ENCODE measurements at regions of chr3 and their contacts with region 1.

Region 1: DNA sequence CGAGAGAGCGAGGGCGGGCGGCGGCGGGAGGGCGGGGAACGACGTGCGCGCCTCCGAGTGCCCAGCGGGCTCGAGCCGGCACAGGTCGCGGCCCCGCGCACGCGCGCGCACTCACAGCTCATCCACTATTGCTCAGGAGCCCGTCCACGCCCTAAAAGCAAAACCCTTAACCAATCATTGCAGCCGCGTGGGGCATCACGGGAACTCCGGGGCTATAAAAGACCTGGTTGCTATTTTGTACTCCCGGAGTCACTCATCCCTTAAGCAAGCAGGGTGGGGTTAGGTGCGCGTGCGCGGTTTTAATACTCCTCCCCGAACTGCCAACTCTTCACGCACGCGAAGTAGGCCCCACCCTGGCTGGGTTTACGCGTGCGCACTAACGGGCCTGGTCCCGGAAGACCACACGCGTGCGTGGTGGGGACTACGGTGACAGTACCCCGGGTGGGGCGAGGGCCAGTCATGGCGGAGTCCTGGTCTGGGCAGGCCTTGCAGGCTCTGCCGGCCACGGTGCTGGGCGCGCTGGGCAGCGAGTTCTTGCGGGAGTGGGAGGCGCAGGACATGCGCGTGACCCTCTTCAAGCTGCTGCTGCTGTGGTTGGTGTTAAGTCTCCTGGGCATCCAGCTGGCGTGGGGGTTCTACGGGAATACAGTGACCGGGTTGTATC is at the starts of genes RHOA and TCTA:
- DNase-seq: peak; percentile 94 to 100 (median 99)
- ATAC-seq: peak; percentile 90
- H3K4me3 ChIP-seq: peak within 1 kb of the TSS; percentile 86
- H3K4me3 Mint-ChIP-seq: peak within 1 kb of the TSS; percentile 82 to 97 (median 94)
- H3K27ac ChIP-seq: peak within 1 kb of the TSS; percentile 96
- H3K27ac Mint-ChIP-seq: peak within 1 kb of the TSS; percentile 88 to 97 (median 95)
- H3K4me1 ChIP-seq: peaks cover 61 to 65% of the 10 kb centered on the region in 2 donors
- H3K4me1 Mint-ChIP-seq: peaks cover 51 to 82% (median 71%) of the 10 kb centered on the region in 7 donors
- H3K27me3 ChIP-seq: no peaks in the 10 kb centered on the region
- H3K27me3 Mint-ChIP-seq: peaks cover 0 to 2% (median 0%) of the 10 kb centered on the region in 5 donors
- total RNA-seq, gene RHOA: 212 to 411 (median 218) TPM
- total RNA-seq, gene TCTA: 24.9 to 34.5 (median 28.5) TPM

Region 2: GRCh38 chr3:49021813-49022687 is 390.1 kb before region 1 on chr3 and contains the start of gene NDUFAF3:
- CTCF ChIA-PET with region 1: no interaction called
- POLR2A ChIA-PET with region 1: no interaction called
- intact Hi-C with region 1: loop called in 1 of 2 experiments (anchors 1 kb)
- DNase-seq: peak; percentile 84 to 96 (median 89)
- ATAC-seq: peak; percentile 89
- H3K4me3 ChIP-seq: peak within 1 kb of the TSS; percentile 99
- H3K4me3 Mint-ChIP-seq: peak within 1 kb of the TSS; percentile 92 to 99 (median 97)
- H3K27ac ChIP-seq: peak within 1 kb of the TSS; percentile 98
- H3K27ac Mint-ChIP-seq: peak within 1 kb of the TSS; percentile 95 to 99 (median 98)
- H3K4me1 ChIP-seq: peaks cover 24 to 25% of the 10 kb centered on the region in 2 donors
- H3K4me1 Mint-ChIP-seq: peaks cover 21 to 61% (median 47%) of the 10 kb centered on the region in 7 donors
- H3K27me3 ChIP-seq: no peaks in the 10 kb centered on the region
- H3K27me3 Mint-ChIP-seq: peaks cover 0 to 2% (median 0%) of the 10 kb centered on the region in 5 donors
- total RNA-seq, gene NDUFAF3: 63.8 to 110 (median 89.3) TPM

Region 3: DNA sequence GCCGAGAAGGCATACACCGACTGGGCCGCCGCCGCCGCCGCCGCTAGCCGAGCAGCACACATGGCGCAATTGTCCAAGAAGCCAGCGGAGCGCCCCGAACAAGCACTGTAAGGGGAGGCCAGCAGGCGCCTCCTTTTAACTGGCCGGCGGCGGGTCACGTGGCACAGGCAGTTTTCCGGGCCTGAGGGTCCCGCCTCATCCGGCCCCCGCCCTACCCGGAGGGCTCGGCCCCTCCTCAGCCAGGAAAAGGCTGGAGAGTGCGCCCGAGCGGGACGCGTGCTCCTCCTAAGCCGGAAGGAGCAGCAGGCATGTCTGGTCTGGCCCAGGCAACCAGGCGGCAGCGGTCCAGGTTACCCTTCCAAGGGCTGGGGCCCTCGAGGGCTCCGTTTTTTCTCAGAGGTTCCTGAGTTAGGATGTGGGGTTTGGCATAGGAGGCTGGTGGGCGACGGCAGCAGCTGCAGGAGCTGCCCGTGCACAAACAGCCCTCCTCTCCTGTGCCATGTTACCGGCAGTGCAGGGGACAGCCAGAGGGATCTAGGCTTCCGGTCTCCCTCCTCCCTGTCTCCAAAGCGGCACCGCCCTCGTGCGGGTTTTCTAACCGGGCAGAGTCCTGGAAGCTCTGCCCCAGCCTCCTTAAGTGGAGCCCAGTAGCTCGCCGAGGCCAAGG is 53.8 kb before region 1 on chr3 and contains the start of gene GPX1:
- CTCF ChIA-PET with region 1: no interaction called
- POLR2A ChIA-PET with region 1: interaction called, 4 read pairs
- intact Hi-C with region 1: loop called (anchors 1 kb)
- DNase-seq: peak; percentile 45 to 89 (median 57)
- ATAC-seq: peak; percentile 87
- H3K4me3 ChIP-seq: peak within 1 kb of the TSS; percentile 85
- H3K4me3 Mint-ChIP-seq: peak within 1 kb of the TSS; percentile 88 to 99 (median 92)
- H3K27ac ChIP-seq: peak within 1 kb of the TSS; percentile 81
- H3K27ac Mint-ChIP-seq: peak within 1 kb of the TSS; percentile 92 to 98 (median 95)
- H3K4me1 ChIP-seq: peaks cover 17% of the 10 kb centered on the region in 2 donors
- H3K4me1 Mint-ChIP-seq: peaks cover 14 to 43% (median 25%) of the 10 kb centered on the region in 7 donors
- H3K27me3 ChIP-seq: no peaks in the 10 kb centered on the region
- H3K27me3 Mint-ChIP-seq: no peaks in the 10 kb centered on the region
- total RNA-seq, gene GPX1: 56.9 to 201 (median 86.9) TPM

Region 4: GRCh38 chr3:49428697-49429100 is 16.6 kb after region 1 on chr3:
- CTCF ChIA-PET with region 1: interaction called, 6 read pairs
- POLR2A ChIA-PET with region 1: interaction called, 26 read pairs
- intact Hi-C with region 1: loop called (anchors 1 kb)
- DNase-seq: peak in 1 of 9 donors; percentile 13
- ATAC-seq: no peak
- H3K4me3 ChIP-seq: peak overlapping the region; percentile 84
- H3K4me3 Mint-ChIP-seq: peak overlapping the region; percentile 88 to 98 (median 94)
- H3K27ac ChIP-seq: peak overlapping the region; percentile 83
- H3K27ac Mint-ChIP-seq: peak overlapping the region; percentile 49 to 96 (median 94)
- H3K4me1 ChIP-seq: peaks cover 0 to 5% of the 10 kb centered on the region in 2 donors
- H3K4me1 Mint-ChIP-seq: peaks cover 17 to 37% (median 28%) of the 10 kb centered on the region in 7 donors
- H3K27me3 ChIP-seq: no peaks in the 10 kb centered on the region
- H3K27me3 Mint-ChIP-seq: no peaks in the 10 kb centered on the region

Region 5: DNA sequence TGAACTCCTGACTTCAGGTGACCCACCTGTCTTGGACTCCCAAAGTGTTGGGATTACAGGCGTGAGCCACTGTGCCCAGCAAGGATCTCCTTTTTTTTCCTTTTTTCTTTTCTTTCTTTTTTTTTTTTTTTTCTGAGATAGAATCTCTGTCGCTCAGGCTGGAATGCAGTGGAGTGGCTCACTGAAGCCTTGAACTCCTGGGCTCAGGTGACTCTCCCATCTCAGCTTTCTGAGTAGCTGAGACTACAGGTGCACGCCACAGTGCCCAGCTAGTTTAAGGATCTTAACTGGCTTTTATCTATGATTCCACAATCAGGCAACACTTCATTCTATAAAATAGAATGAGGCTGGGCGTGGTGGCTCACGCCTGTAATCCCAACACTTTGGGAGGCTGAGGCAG is 33.3 kb after region 1 on chr3:
- CTCF ChIA-PET with region 1: interaction called, 23 read pairs
- POLR2A ChIA-PET with region 1: interaction called, 17 read pairs
- intact Hi-C with region 1: loop called (anchors 1 kb)
- DNase-seq: no peak
- ATAC-seq: no peak
- H3K4me3 ChIP-seq: no peak overlapping the region
- H3K4me3 Mint-ChIP-seq: no peak overlapping the region
- H3K27ac ChIP-seq: no peak overlapping the region
- H3K27ac Mint-ChIP-seq: peak overlapping the region in 3 of 9 donors; percentile 45 to 92 (median 60)
- H3K4me1 ChIP-seq: peaks cover 10 to 15% of the 10 kb centered on the region in 2 donors
- H3K4me1 Mint-ChIP-seq: peaks cover 5 to 25% (median 18%) of the 10 kb centered on the region in 7 donors
- H3K27me3 ChIP-seq: no peaks in the 10 kb centered on the region
- H3K27me3 Mint-ChIP-seq: no peaks in the 10 kb centered on the region

Region 6: GRCh38 chr3:49454458-49454857 is 42.4 kb after region 1 on chr3:
- CTCF ChIA-PET with region 1: interaction called, 17 read pairs
- POLR2A ChIA-PET with region 1: interaction called, 17 read pairs
- intact Hi-C with region 1: loop called (anchors 1 kb)
- DNase-seq: no peak
- ATAC-seq: no peak
- H3K4me3 ChIP-seq: no peak overlapping the region
- H3K4me3 Mint-ChIP-seq: no peak overlapping the region
- H3K27ac ChIP-seq: no peak overlapping the region
- H3K27ac Mint-ChIP-seq: peak overlapping the region in 1 of 9 donors; percentile 63
- H3K4me1 ChIP-seq: no peaks in the 10 kb centered on the region
- H3K4me1 Mint-ChIP-seq: no peaks in the 10 kb centered on the region
- H3K27me3 ChIP-seq: no peaks in the 10 kb centered on the region
- H3K27me3 Mint-ChIP-seq: no peaks in the 10 kb centered on the region

Region 7: DNA sequence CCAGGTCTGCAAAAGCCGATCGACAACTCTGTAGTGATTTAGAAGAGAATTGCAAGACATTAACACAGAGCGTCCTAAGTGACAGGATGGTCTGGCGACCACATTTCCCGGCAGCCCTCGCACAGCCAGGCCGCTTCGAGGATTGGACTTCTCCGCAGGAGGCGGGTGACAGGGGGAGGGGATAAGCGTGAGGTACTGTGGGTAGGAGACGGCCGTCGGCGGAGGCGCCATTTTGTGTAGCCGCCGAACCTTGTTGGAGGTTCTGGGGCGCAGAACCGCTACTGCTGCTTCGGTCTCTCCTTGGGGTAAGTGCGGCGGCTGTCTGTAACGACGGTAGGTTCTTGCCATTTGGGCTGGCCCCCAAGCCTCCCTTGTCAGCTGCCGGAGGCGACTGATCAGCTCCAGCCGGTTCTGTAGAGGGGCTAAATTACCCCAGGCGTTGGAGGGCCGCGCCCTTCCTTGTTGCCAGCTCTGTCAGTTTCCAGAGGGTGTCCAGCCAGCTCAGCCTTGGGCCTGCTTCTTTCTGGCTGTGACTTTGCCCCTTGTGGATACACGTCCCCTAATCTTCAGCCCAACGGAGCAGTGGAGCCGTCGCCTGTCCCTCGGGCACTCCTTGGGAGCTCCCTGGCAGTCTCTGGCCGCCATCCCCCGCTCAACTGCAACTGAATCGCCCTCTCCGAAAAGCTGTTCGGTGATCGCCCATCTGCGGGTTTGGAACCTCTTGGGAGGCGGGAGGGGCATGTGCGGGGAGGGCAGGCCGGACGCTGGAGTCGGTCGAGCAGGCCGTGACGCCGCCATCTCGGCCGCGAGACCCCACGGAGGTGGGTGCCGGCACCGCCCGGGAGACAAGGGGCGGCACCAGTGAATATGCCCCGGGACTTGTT is 676.9 kb after region 1 on chr3 and contains the start of gene RBM5:
- CTCF ChIA-PET with region 1: no interaction called
- POLR2A ChIA-PET with region 1: no interaction called
- intact Hi-C with region 1: loop called in 1 of 2 experiments (anchors 10 kb)
- DNase-seq: peak; percentile 71 to 91 (median 89)
- ATAC-seq: peak; percentile 100
- H3K4me3 ChIP-seq: peak within 1 kb of the TSS; percentile 88
- H3K4me3 Mint-ChIP-seq: peak within 1 kb of the TSS; percentile 94 to 98 (median 96)
- H3K27ac ChIP-seq: peak within 1 kb of the TSS; percentile 98
- H3K27ac Mint-ChIP-seq: peak within 1 kb of the TSS; percentile 94 to 99 (median 97)
- H3K4me1 ChIP-seq: peaks cover 16 to 23% of the 10 kb centered on the region in 2 donors
- H3K4me1 Mint-ChIP-seq: peaks cover 24 to 36% (median 32%) of the 10 kb centered on the region in 7 donors
- H3K27me3 ChIP-seq: no peaks in the 10 kb centered on the region
- H3K27me3 Mint-ChIP-seq: no peaks in the 10 kb centered on the region
- total RNA-seq, gene RBM5: 223 to 420 (median 342) TPM

Measured in naive thymus-derived CD4-positive, alpha-beta T cell (primary cell).